ENCODE measurements at regions of chr22 and their contacts with region 1.

Region 1: DNA sequence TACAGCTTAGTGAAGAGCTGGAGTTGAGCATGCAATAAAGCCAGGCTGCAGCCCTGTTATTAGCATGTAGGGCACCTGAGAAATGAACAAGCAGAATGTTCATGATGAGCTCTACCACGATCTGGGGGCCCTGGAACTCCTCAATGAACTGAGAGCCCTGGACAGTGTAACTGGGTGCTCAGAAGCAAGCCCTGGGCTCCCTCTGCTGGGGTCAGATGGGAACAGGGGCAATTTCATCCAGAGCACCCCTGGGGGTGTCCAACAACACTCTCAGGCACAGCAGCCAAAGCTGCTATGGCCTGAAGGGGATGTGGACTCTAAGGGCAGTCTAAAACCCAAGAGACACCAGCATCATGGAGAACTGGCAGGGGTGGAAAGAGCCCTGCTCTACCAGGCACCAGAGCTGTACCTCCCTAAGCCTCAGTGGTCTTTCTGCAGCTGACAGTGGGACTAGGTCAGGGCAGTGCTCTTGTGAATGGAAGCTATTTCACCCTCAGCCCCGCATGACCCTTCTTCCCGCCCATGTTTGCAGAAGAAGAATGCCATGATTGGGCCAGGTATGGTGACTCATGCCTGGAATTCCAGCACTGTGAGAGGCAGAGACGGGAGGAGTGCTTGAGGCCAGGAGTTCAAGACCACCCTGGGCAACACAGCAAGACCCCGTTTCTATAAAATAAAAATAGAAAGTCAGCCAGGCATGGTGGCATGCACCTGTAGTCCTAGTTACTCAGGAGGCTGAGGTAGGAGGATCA is 28.9 kb downstream of the THOC5 start:
- DNase-seq: peak; percentile 29
- ATAC-seq: peak; percentile 55

Region 2: DNA sequence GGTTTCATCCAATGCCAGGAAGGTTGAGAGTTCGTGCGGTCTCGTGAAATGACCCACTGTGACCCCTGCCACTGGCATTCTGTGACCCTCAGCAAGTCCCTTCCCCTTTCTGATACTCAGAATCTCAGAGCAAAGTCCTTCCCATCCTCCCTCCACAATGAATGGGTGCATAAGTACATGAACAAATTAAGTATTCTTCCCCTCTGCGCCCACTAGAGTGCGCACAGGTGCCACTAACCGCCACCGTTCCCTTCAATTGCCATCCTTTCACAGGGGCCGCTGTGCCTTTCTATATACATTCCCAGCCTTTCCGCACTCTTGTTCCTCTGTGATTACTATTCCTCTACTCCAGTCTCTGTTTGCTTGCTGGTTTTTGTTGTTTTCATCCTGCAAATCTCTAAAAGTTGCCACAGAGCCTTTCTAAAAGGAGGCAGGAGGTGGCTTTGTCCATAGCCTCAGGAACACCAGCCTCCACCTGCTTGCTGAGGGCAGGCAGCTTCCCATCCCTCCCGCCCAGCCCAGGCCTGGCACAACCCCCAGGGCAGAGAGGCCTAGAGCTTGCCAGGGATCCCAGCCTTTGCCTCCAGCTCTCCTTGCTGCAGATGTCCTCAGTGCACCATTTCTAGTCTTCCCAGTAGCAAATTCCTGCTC is 129.6 kb before region 1 on chr22:
- intact Hi-C with region 1: loop called (anchors 1 to 10 kb)
- DNase-seq: peak; percentile 64
- ATAC-seq: peak; percentile 89 to 90

Region 3: GRCh38 chr22:29772170-29772641 is 247.6 kb after region 1 on chr22:
- intact Hi-C with region 1: no loop called
- DNase-seq: no peak
- ATAC-seq: peak; percentile 27 to 50

Measured in left cardiac atrium (tissue), 4 donors.